ENCODE measurements at regions of chr7 and their contacts with region 1.

Region 1: GRCh38 chr7:140983802-140984201 is 30.9 kb downstream of the MRPS33 start:
- DNase-seq: peak; percentile 14
- H3K4me3 Mint-ChIP-seq: no peak overlapping the region
- H3K27ac Mint-ChIP-seq: no peak overlapping the region
- H3K4me1 Mint-ChIP-seq: no peaks in the 10 kb centered on the region
- H3K27me3 Mint-ChIP-seq: peaks cover 2% of the 10 kb centered on the region

Region 2: GRCh38 chr7:140517546-140518369 is 466.0 kb before region 1 on chr7:
- CTCF ChIA-PET with region 1: interaction called, 5 read pairs
- intact Hi-C with region 1: loop called (anchors 2 kb)
- DNase-seq: peak; percentile 86
- H3K4me3 Mint-ChIP-seq: no peak overlapping the region
- H3K27ac Mint-ChIP-seq: no peak overlapping the region
- H3K4me1 Mint-ChIP-seq: peaks cover 5% of the 10 kb centered on the region
- H3K27me3 Mint-ChIP-seq: no peaks in the 10 kb centered on the region

Region 3: DNA sequence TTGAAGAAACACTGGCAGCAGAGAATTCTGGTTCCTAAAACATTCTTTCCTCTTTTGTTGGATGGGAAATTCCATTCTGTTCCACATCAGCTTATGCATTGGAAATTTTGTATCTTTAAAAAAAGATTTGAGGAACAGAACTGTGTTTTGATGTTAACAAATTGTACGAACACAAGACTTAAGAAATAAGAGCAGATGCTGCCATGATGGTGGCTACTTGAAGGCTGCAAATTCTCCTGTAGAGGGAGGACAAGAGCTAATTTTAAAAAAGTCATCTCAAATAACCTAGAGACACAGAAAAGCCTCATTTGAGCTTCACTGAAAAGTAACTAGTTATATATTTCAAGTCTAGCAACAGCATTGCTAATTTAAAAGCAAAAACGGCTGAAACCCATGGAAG is 257.5 kb before region 1 on chr7:
- CTCF ChIA-PET with region 1: interaction called, 4 read pairs
- intact Hi-C with region 1: loop called (anchors 2 kb)
- DNase-seq: no peak
- H3K4me3 Mint-ChIP-seq: no peak overlapping the region
- H3K27ac Mint-ChIP-seq: no peak overlapping the region
- H3K4me1 Mint-ChIP-seq: peaks cover 17% of the 10 kb centered on the region
- H3K27me3 Mint-ChIP-seq: no peaks in the 10 kb centered on the region

Region 4: GRCh38 chr7:140810830-140811556 is 172.8 kb before region 1 on chr7:
- CTCF ChIA-PET with region 1: interaction called, 74 read pairs
- intact Hi-C with region 1: loop called (anchors 1 kb)
- DNase-seq: peak; percentile 78
- H3K4me3 Mint-ChIP-seq: no peak overlapping the region
- H3K27ac Mint-ChIP-seq: no peak overlapping the region
- H3K4me1 Mint-ChIP-seq: peaks cover 2% of the 10 kb centered on the region
- H3K27me3 Mint-ChIP-seq: no peaks in the 10 kb centered on the region

Measured in activated naive CD4-positive, alpha-beta T cell treated with anti-CD3 and anti-CD28 coated beads for 36 hours (primary cell).